Activated B cell treated with CpG ODN at 0.5 μM for 24 hours (primary cell): ENCODE measurements at regions of chr1 and their contacts with region 1.

Region 1: DNA sequence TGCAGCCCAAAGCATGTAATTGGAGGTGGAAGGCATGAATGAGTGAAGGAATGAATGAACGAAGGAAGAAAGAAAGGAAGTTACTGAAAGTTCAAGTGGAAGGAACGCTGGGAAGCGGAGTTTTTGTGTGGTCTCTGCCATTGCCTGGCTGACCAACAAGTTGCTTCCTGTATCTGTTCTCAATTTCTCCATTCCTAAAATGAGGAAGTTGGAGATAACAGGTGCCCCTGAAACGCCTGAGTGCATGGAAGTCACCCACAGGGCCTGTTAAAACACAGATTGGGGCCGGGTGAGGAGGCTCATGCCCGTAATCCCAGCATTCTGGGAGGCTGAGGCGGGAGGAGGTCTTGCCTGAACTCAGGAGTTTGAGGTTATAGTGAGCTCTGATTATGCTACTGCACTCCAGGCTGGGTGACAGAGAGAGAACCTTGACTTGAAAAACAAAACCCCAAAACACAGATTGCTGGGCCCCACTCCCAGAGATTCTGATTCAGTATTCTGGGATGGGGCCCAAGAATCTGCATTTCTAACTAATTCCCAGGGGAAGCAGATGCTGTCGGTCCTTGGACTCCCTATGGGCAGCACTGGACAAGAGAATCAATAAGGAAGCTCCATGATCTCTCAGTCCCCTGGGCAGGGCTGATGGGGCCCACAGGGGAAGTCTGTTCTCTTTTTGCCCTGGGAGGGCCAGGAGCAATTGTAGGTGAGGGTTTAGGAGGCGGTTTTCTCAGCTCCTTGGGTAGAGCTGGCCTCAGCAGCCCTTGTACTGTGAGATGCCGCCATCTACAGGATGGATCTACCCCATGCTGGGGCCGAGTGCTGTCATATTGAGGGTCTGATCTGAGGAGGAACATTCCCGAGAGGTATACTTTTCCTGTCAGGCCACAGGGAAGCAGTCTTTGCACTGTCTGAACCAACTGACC is 3.3 kb upstream of the CNR2 start:
- DNase-seq: peak; percentile 50
- ATAC-seq: peak; percentile 72
- H3K4me3 Mint-ChIP-seq: peak overlapping the region; percentile 61
- H3K27ac Mint-ChIP-seq: peak overlapping the region; percentile 99
- H3K4me1 Mint-ChIP-seq: peaks cover 69% of the 10 kb centered on the region
- H3K27me3 Mint-ChIP-seq: no peaks in the 10 kb centered on the region
- CTCF ChIP-seq: peak; percentile 37

Region 2: DNA sequence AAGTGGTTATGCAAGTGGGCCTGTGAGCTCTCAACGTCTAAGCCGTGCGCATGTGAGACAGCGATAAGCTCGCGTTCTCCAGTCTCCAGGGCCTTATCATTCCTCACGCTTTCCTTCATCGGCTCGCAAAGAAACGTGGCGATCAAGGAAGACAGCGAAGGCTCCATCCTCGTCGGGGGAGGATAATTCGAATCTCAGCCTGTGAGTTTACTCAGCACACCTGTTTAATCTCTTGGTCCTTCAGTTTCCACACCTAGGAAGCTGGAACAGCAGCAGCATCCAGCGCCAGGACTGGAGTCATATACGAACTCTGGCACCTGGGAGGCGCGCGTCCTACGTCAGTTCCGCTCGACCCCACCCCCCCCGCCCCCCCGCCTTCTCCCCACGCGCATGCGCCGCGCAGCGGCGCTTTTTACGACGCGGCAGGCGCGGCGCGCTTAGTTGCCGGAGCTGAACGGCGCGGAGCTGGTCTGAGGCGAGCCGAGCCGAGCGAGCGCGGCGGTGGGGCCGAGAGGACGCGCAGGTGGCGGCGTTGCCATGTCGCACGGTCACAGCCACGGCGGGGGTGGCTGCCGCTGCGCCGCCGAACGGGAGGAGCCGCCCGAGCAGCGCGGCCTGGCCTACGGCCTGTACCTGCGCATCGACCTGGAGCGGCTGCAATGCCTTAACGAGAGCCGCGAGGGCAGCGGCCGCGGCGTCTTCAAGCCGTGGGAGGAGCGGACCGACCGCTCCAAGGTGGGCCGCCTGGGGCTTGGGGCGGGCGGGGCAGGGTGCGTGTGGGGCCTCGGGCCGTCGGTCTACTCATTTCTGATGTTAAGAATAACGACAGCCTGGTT is 138.3 kb before region 1 on chr1 and contains the start of gene PITHD1:
- CTCF ChIA-PET with region 1: interaction called, 18 read pairs
- POLR2A ChIA-PET with region 1: interaction called, 13 read pairs
- intact Hi-C with region 1: no loop called
- DNase-seq: peak; percentile 83
- ATAC-seq: peak; percentile 86
- H3K4me3 Mint-ChIP-seq: peak within 1 kb of the TSS; percentile 91
- H3K27ac Mint-ChIP-seq: peak within 1 kb of the TSS; percentile 90
- H3K4me1 Mint-ChIP-seq: peaks cover 30% of the 10 kb centered on the region
- H3K27me3 Mint-ChIP-seq: no peaks in the 10 kb centered on the region
- CTCF ChIP-seq: no peak
- total RNA-seq, gene PITHD1: 58.7 and 63.3 TPM in 2 replicates

Region 3: DNA sequence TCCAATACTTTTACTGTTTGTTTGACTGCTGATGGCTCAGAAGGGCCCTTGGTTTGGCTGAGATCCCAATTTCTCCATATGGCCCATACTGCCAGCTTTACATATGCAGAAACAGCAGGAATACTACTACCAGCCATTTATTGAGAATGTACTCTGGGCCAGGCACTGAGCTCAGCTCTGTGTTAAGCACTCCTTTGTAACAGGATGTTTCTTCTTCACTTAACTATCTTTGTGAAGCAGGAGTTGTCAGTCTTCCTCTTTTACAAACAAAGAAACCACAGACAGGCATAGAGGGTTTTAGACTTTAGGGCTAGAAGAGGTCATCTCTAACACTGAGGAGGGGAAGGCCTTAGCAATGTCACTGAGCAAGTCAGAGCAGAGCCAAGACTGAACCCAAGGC is 99.6 kb before region 1 on chr1:
- CTCF ChIA-PET with region 1: interaction called, 188 read pairs
- POLR2A ChIA-PET with region 1: interaction called, 17 read pairs
- intact Hi-C with region 1: no loop called
- DNase-seq: no peak
- ATAC-seq: no peak
- H3K4me3 Mint-ChIP-seq: no peak overlapping the region
- H3K27ac Mint-ChIP-seq: no peak overlapping the region
- H3K4me1 Mint-ChIP-seq: peaks cover 3% of the 10 kb centered on the region
- H3K27me3 Mint-ChIP-seq: no peaks in the 10 kb centered on the region
- CTCF ChIP-seq: no peak

Region 4: GRCh38 chr1:23867953-23868556 is 48.4 kb before region 1 on chr1 and contains the start of gene FUCA1:
- CTCF ChIA-PET with region 1: interaction called, 21 read pairs
- POLR2A ChIA-PET with region 1: interaction called, 20 read pairs
- intact Hi-C with region 1: loop called (anchors 1 kb)
- DNase-seq: peak; percentile 92
- ATAC-seq: peak; percentile 97
- H3K4me3 Mint-ChIP-seq: peak within 1 kb of the TSS; percentile 84
- H3K27ac Mint-ChIP-seq: peak within 1 kb of the TSS; percentile 87
- H3K4me1 Mint-ChIP-seq: peaks cover 36% of the 10 kb centered on the region
- H3K27me3 Mint-ChIP-seq: no peaks in the 10 kb centered on the region
- CTCF ChIP-seq: no peak
- total RNA-seq, gene FUCA1: 9.5 and 10.7 TPM in 2 replicates

Region 5: GRCh38 chr1:23902321-23903278 is 13.9 kb before region 1 on chr1:
- CTCF ChIA-PET with region 1: interaction called, 16 read pairs
- POLR2A ChIA-PET with region 1: interaction called, 70 read pairs
- intact Hi-C with region 1: loop called (anchors 1 kb)
- DNase-seq: peak; percentile 23
- ATAC-seq: no peak
- H3K4me3 Mint-ChIP-seq: peak overlapping the region; percentile 67
- H3K27ac Mint-ChIP-seq: peak overlapping the region; percentile 93
- H3K4me1 Mint-ChIP-seq: peaks cover 83% of the 10 kb centered on the region
- H3K27me3 Mint-ChIP-seq: no peaks in the 10 kb centered on the region
- CTCF ChIP-seq: no peak